B cell (primary cell): ENCODE measurements at regions of chrX and their contacts with region 1.

Region 1: GRCh38 chrX:45758319-45758718 is 557.6 kb upstream of the DIPK2B start:
- DNase-seq: peak; percentile 30
- ATAC-seq: no peak
- H3K4me3 ChIP-seq: peak overlapping the region; percentile 11 to 40 (median 27)
- H3K4me3 Mint-ChIP-seq: peak overlapping the region; percentile 86
- H3K27ac ChIP-seq: peak overlapping the region; percentile 67 to 68
- H3K27ac Mint-ChIP-seq: peak overlapping the region; percentile 90
- H3K4me1 ChIP-seq: peaks cover 85 to 90% of the 10 kb centered on the region in 2 donors
- H3K4me1 Mint-ChIP-seq: peaks cover 70% of the 10 kb centered on the region
- H3K27me3 ChIP-seq: no peaks in the 10 kb centered on the region
- H3K27me3 Mint-ChIP-seq: no peaks in the 10 kb centered on the region
- CTCF ChIP-seq: no peak

Region 2: GRCh38 chrX:45735571-45735970 is 22.7 kb before region 1 on chrX:
- CTCF ChIA-PET with region 1: no interaction called
- POLR2A ChIA-PET with region 1: no interaction called
- intact Hi-C with region 1: no loop called
- DNase-seq: no peak
- ATAC-seq: no peak
- H3K4me3 ChIP-seq: no peak overlapping the region
- H3K4me3 Mint-ChIP-seq: no peak overlapping the region
- H3K27ac ChIP-seq: no peak overlapping the region
- H3K27ac Mint-ChIP-seq: no peak overlapping the region
- H3K4me1 ChIP-seq: no peaks in the 10 kb centered on the region
- H3K4me1 Mint-ChIP-seq: peaks cover 3% of the 10 kb centered on the region
- H3K27me3 ChIP-seq: no peaks in the 10 kb centered on the region
- H3K27me3 Mint-ChIP-seq: no peaks in the 10 kb centered on the region
- CTCF ChIP-seq: no peak

Region 3: DNA sequence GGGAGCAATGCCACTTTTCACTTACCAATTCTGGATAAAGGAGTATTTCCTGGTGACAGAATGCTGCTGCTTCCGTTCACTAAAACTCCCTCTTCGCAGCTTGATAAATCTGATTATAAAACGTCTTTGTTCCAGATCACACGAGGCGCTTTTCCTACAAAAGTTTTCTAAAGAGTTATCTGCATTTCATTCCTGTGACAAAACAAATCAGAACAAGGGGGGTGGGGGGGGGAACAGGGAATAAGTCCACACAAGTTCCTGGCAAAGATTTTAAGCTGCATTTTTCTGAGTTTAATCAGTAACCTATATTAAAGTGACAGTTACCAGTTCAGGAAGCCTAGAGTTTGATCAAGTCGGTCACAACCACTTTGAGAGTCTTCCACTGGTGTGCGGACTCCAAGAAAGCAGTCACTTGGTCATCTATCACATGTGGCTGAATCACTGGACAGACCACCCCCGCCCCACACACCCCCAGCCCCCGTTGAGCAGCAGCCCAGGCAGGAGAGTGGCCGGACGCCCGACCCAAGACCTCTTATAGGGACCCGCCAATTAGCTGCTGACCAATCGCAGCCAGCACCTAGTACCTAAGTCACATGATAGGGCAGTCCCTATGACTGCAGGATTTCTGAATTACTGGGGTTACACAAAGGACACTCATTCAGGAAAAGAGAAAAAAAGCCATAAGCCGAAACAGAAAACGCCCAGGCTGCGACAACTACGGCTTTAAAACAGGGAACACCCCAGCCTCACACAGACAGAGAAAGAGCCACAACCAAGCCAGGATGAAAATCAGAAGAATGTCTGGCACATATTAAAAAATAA is 11.7 kb after region 1 on chrX:
- CTCF ChIA-PET with region 1: interaction called, 3 read pairs
- POLR2A ChIA-PET with region 1: interaction called, 12 read pairs
- intact Hi-C with region 1: loop called (anchors 1 kb)
- DNase-seq: peak; percentile 70
- ATAC-seq: peak; percentile 77
- H3K4me3 ChIP-seq: peak overlapping the region; percentile 53 to 73 (median 61)
- H3K4me3 Mint-ChIP-seq: peak overlapping the region; percentile 92
- H3K27ac ChIP-seq: peak overlapping the region; percentile 80
- H3K27ac Mint-ChIP-seq: peak overlapping the region; percentile 93
- H3K4me1 ChIP-seq: peaks cover 23 to 24% of the 10 kb centered on the region in 2 donors
- H3K4me1 Mint-ChIP-seq: peaks cover 47% of the 10 kb centered on the region
- H3K27me3 ChIP-seq: no peaks in the 10 kb centered on the region
- H3K27me3 Mint-ChIP-seq: no peaks in the 10 kb centered on the region
- CTCF ChIP-seq: no peak

Region 4: GRCh38 chrX:45806410-45807121 is 48.2 kb after region 1 on chrX:
- CTCF ChIA-PET with region 1: no interaction called
- POLR2A ChIA-PET with region 1: no interaction called
- intact Hi-C with region 1: loop called (anchors 2 kb)
- DNase-seq: peak; percentile 42
- ATAC-seq: peak; percentile 51
- H3K4me3 ChIP-seq: peak overlapping the region in 4 of 5 experiments; percentile 35 to 59 (median 40)
- H3K4me3 Mint-ChIP-seq: peak overlapping the region; percentile 71
- H3K27ac ChIP-seq: peak overlapping the region; percentile 37 to 44
- H3K27ac Mint-ChIP-seq: peak overlapping the region; percentile 64
- H3K4me1 ChIP-seq: peaks cover 10 to 11% of the 10 kb centered on the region in 2 donors
- H3K4me1 Mint-ChIP-seq: peaks cover 23% of the 10 kb centered on the region
- H3K27me3 ChIP-seq: no peaks in the 10 kb centered on the region
- H3K27me3 Mint-ChIP-seq: no peaks in the 10 kb centered on the region
- CTCF ChIP-seq: no peak